Endothelial cell of umbilical vein (primary cell): ENCODE measurements at regions of chr15 and their contacts with region 1.

Region 1: DNA sequence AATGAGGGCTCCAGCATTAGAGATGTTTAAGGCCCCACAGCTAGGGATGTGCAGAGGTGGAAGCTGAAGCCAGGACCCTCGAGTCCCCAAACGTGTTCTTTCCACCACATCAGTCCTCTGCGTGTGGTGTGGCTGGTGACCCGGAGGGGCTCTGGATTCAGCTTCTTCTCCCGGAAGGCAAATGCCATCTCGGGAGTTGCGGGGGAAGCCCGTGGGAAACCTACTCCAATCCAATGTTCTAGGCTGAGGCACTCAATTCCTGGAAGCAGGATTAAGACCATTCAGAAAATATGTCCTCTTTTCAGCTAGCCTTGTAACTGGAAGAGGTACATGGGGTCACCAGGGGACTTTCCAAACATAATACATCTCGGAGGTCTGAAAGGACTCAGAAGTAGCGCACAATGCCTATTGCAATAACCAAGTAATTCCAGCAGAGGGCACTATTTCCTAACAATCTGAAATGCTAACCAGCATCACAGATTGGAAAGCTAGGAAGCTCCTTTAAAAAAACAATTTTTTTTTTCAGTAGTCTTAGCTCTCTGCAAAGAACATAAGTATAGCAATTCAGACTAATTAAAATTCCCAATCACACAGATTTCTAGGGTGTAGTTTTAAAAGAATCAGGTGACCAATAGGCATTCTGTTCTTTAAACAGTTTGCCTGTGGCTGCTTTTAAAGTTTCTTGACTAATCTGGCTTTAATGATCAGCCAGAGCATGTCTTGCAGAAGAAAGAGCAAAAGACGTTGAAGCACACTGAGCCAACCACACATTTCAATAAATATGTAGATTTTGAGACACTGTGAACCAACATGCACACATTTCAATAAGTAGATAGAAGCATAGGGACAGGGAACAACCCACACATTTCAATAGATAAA is 36.1 kb downstream of the BNC1 start:
- DNase-seq: peak; percentile 78
- H3K4me3 ChIP-seq: no peak overlapping the region
- H3K27ac ChIP-seq: no peak overlapping the region
- H3K4me1 ChIP-seq: no peaks in the 10 kb centered on the region
- H3K27me3 ChIP-seq: peaks cover 10 to 16% of the 10 kb centered on the region in 2 experiments
- CTCF ChIP-seq: peak; percentile 54 to 66
- POLR2A ChIP-seq: no peak

Region 2: GRCh38 chr15:81504170-81504905 is 1744.1 kb before region 1 on chr15:
- CTCF ChIA-PET with region 1: no interaction called
- POLR2A ChIA-PET with region 1: no interaction called
- dilution Hi-C with region 1: no loop called
- intact Hi-C with region 1: no loop called
- DNase-seq: peak; percentile 96
- H3K4me3 ChIP-seq: no peak overlapping the region
- H3K27ac ChIP-seq: peak overlapping the region; percentile 82
- H3K4me1 ChIP-seq: peaks cover 19% of the 10 kb centered on the region
- H3K27me3 ChIP-seq: no peaks in the 10 kb centered on the region
- CTCF ChIP-seq: no peak
- POLR2A ChIP-seq: no peak

Region 3: DNA sequence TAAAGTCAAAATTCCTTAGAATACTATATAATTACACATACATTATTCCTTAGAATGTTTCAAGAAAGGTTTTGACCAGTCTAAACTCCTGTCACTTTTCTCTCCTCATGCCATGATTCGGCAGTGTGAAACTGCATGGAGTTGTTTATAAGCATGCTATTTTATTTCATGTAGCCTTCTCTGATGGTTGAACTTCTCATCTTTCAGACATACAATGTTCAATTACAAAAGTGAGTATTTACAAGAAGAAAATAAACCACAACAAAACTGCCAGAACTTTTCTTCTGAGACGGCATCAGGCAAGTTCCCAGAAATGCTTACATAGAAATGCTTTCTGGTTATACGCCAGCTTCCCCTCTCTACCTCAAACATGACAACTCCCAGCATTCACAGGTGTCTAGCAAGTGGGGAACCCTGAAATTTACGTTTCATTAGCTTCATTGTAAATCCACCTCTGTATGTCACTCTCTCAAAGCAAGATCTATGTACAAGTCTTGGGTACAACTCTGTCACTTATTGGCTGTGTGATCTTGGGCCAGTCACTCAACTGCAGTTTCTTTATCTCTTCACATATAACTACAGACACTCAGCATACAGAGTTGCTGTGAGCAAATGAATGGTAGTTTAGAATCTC is 83.5 kb before region 1 on chr15:
- CTCF ChIA-PET with region 1: no interaction called
- POLR2A ChIA-PET with region 1: no interaction called
- dilution Hi-C with region 1: no loop called
- intact Hi-C with region 1: no loop called
- DNase-seq: no peak
- H3K4me3 ChIP-seq: peak overlapping the region in 1 of 3 experiments; percentile 49
- H3K27ac ChIP-seq: peak overlapping the region; percentile 89
- H3K4me1 ChIP-seq: peaks cover 44% of the 10 kb centered on the region
- H3K27me3 ChIP-seq: no peaks in the 10 kb centered on the region
- CTCF ChIP-seq: no peak
- POLR2A ChIP-seq: no peak

Region 4: DNA sequence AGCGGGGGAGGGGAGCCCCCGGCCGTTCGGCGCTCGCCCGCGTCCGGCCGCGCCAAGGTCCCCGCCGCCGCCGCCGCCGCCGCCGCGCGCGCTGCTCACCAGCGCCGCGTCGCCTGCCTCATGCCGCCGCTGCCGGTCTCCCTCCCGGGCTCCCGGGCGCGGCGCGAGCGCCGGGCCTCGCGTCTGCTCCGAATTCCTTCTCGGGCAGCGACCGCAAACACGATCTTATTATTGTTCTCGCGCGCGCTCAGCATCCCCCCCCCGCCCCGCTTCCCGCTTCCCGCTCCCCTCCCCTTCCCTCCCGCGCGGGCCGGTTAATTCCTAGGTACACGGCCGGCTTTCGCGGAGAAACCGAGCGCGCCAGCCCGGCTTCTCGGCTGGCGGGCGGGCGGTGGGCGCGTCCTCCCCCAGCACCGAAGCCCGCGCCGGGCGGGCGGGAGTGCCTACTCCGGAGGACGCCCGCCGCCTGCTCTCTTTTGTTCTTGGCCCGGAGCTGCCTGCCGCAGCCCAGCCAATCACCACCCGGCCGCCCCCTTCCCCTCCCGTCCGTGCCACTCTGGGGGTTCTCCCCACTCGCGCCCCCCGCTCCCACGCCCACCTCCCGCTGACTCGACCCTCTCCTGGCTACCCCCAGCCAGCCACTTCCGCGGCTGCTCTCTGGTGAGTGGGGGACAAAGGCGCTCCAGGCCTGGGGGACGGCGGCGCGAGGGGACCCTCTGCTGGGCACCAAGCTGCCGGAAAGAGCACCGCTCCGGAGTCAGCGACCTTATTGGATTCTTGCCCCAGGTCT is 40.6 kb before region 1 on chr15 and contains the start of gene HDGFL3:
- CTCF ChIA-PET with region 1: interaction called, 10 read pairs
- POLR2A ChIA-PET with region 1: interaction called, 9 read pairs
- dilution Hi-C with region 1: no loop called
- intact Hi-C with region 1: no loop called
- DNase-seq: peak; percentile 59
- H3K4me3 ChIP-seq: peak within 1 kb of the TSS; percentile 91 to 95 (median 93)
- H3K27ac ChIP-seq: peak within 1 kb of the TSS; percentile 95
- H3K4me1 ChIP-seq: peaks cover 29% of the 10 kb centered on the region
- H3K27me3 ChIP-seq: no peaks in the 10 kb centered on the region
- CTCF ChIP-seq: peak in 1 of 2 donors; percentile 26
- POLR2A ChIP-seq: peak; percentile 47
- total RNA-seq, gene HDGFL3: 155 and 156 TPM in 2 replicates

Region 5: GRCh38 chr15:83283138-83283812 is 34.9 kb after region 1 on chr15:
- CTCF ChIA-PET with region 1: interaction called, 12 read pairs
- POLR2A ChIA-PET with region 1: no interaction called
- dilution Hi-C with region 1: no loop called
- intact Hi-C with region 1: no loop called
- DNase-seq: peak; percentile 47
- H3K4me3 ChIP-seq: peak overlapping the region; percentile 57 to 81 (median 74)
- H3K27ac ChIP-seq: peak overlapping the region; percentile 25
- H3K4me1 ChIP-seq: peaks cover 31% of the 10 kb centered on the region
- H3K27me3 ChIP-seq: peaks cover 3 to 9% of the 10 kb centered on the region in 2 experiments
- CTCF ChIP-seq: no peak
- POLR2A ChIP-seq: no peak

Region 6: DNA sequence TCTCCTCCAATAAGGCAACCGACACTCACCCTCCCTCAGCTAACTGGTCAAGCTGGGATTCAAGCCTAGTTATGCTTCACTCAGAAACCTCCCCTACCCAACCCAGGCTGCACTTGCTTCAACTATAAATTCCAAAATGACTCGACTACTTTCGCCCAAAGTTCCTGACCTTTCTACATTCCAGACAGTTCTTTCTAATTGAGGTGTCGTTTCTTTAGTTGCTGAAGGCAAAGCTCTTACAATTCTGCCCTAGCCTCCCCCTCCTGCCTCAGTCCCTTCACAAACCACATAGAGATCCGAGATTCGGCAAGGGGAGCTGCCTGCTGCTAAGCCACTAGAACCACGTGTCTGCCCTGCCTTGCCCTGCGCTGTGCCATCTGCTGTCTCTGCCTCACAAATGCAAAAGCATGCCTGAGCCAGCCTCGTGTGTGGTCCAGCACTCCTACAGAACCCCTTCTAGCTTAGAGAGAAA is 124.1 kb after region 1 on chr15:
- CTCF ChIA-PET with region 1: interaction called, 29 read pairs
- POLR2A ChIA-PET with region 1: no interaction called
- dilution Hi-C with region 1: no loop called
- intact Hi-C with region 1: no loop called
- DNase-seq: no peak
- H3K4me3 ChIP-seq: no peak overlapping the region
- H3K27ac ChIP-seq: no peak overlapping the region
- H3K4me1 ChIP-seq: no peaks in the 10 kb centered on the region
- H3K27me3 ChIP-seq: peaks cover 5 to 18% of the 10 kb centered on the region in 2 experiments
- CTCF ChIP-seq: no peak
- POLR2A ChIP-seq: no peak

Region 7: DNA sequence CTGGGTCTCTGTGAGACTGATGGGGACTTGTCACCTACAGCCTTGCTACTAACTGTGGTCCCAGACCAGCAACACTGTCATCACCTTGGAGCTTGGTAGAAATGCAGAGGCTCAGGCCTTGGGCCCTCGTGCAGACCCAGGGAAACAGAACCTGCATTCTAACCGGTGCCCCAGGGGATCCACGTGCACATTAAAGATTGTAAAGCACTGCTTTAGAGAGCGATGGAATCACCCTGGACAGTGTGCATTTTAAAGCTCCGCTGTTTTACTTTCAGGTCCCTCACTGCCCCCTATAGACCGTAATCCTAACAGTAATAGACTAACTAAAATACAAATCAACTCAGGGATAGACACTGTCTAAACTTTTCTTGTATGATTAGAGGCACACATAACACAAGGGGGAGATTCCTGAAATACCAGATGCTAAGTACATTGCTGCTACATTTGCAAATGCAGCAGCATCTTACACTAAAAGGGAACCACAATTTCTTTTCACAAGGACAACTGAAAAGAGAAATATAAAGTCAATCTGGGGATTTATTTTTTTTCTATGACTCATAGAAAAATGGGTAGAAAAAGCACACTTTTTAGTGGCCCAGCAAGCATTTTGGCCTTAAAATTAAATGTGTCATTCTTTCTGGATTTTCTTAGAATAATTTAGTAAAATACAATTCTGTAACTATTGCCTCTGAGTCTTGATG is 188.2 kb after region 1 on chr15:
- CTCF ChIA-PET with region 1: interaction called, 436 read pairs
- POLR2A ChIA-PET with region 1: no interaction called
- dilution Hi-C with region 1: no loop called
- intact Hi-C with region 1: loop called (anchors 1 kb)
- DNase-seq: peak; percentile 47
- H3K4me3 ChIP-seq: no peak overlapping the region
- H3K27ac ChIP-seq: no peak overlapping the region
- H3K4me1 ChIP-seq: no peaks in the 10 kb centered on the region
- H3K27me3 ChIP-seq: peaks cover 0 to 3% of the 10 kb centered on the region in 2 experiments
- CTCF ChIP-seq: peak; percentile 20 to 45
- POLR2A ChIP-seq: no peak

Region 8: GRCh38 chr15:83564975-83565532 is 316.7 kb after region 1 on chr15:
- CTCF ChIA-PET with region 1: interaction called, 94 read pairs
- POLR2A ChIA-PET with region 1: no interaction called
- dilution Hi-C with region 1: no loop called
- intact Hi-C with region 1: no loop called
- DNase-seq: no peak
- H3K4me3 ChIP-seq: no peak overlapping the region
- H3K27ac ChIP-seq: no peak overlapping the region
- H3K4me1 ChIP-seq: no peaks in the 10 kb centered on the region
- H3K27me3 ChIP-seq: no peaks in the 10 kb centered on the region
- CTCF ChIP-seq: no peak
- POLR2A ChIP-seq: no peak